ENCODE measurements at regions of chr17 and their contacts with region 1.

Region 1: DNA sequence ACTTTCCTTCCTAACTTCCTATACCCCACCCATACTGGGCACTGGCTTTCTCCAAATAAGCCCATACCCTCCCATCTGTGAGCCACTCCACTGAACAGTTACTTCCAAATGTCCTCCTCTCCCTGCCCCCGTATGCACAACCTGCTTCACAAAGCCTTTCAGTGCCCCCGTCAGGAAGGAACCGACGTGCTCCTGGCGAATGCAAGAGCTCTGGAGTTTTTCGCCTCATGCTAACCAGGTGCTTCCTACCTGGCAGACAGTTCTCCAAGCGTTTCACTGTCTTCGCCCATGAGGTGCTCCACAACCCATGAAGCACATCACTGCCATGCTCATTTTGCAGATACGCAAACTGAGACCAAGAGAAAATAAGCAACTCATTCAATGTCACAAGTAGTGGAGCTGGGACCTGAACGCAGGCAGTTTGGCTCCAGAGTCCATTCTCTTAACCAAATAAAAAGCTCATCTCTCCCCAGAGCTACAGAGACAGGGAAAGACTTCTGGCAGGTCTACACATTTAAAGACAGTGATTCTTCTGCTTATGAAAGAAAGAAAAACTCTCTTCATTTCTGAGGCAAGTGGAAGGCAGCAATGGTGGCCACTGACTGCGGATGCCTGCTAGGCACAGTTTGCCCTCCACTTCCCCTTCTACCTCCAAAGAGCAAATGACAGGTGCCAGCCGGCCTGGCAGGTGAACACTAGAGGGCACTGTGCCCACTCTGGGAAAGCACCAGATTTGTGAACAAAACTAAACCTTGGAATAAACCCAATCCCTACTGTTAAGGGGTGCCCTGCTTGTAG is 23.8 kb downstream of the SPHK1 start:
- DNase-seq: peak; percentile 82
- H3K4me3 ChIP-seq: no peak overlapping the region; a peak in 1 of 4 replicates
- H3K27ac ChIP-seq: no peak overlapping the region
- H3K4me1 ChIP-seq: peaks cover 0 to 16% of the 10 kb centered on the region in 2 experiments; a peak in 2 of 4 replicates
- H3K27me3 ChIP-seq: no peaks in the 10 kb centered on the region
- CTCF ChIP-seq: peak; percentile 99
- EP300 ChIP-seq: no peak
- RAD21 ChIP-seq: peak; percentile 92

Region 2: DNA sequence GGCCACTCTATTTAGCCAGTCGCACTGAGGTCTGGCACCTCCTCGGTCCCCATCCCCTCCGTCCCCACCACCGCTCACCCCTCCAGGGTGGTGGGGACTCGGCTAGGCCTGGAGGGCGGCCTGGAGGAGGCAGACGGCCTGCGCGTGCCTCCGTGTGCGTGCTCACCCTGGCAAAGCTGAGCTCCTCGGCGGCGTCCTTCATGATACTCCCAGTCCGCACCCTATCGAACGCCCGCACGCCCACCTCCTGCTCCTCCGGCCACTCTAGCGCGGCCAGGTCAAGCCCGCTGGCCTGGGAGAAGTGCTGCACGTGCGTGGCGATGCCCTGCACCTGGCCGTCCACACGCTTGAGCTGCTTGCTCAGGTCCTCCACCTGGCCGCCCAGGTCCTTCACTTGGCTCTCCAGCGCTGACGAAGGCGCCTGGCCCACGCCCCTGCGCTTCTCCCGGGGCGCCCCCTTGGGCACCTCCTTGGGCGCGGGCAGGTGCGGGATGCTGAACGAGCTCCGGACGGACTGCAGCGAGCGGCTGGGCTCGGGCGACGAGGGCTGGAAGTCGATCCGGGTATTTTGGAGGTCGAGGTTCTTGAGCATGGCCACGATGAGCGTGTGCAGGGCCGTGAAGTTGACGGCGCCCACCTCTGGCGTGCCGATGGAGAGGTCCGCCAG is 100.8 kb before region 1 on chr17:
- CTCF ChIA-PET with region 1: interaction called, 24 read pairs
- POLR2A ChIA-PET with region 1: no interaction called
- DNase-seq: no peak
- H3K4me3 ChIP-seq: no peak overlapping the region
- H3K27ac ChIP-seq: no peak overlapping the region
- H3K4me1 ChIP-seq: no peaks in the 10 kb centered on the region
- H3K27me3 ChIP-seq: no peaks in the 10 kb centered on the region
- CTCF ChIP-seq: no peak
- EP300 ChIP-seq: no peak
- RAD21 ChIP-seq: no peak

Region 3: DNA sequence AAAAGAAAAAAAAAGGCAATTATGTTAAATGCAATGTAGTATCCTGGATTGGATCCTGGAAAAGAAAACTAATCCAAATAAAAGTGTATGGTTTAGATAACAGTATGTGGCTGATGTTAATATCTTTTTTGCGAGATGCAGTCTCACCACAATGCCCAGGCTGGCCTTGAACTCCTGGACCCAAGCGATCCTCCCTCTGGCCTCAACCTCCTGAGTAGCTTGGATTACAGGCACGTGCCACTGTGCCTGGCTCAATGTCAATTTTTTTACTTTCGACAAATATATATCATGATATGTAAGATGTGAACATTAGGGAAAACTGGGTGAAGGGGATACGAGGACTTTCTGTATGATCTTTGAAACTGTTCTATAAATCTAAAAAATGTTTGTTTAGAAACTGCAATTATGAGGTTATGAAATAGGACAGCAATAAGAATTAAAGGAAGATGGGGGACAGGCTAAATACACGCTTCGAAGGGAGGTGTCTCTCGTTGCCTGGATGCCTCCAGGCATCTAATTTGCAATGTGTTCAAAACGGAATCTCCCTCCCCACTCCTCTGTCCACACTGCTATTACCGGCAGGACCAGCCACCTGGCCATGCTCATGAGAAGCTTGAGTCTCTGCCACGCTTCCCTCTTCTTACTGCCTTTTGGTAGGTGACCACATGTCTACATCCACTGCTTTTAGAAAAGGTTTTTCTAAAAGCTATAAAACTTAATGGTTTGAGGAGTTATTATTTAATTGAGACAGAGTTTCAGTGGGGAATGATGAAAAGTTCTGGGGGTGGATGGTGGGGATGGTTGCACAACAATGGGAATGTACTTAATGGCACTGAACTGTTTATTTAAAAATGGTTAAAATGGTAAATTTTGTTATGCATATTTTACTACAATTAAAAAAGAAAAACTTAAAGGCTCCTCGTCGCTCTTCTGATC is 29.5 kb after region 1 on chr17:
- CTCF ChIA-PET with region 1: interaction called, 40 read pairs
- POLR2A ChIA-PET with region 1: no interaction called
- DNase-seq: no peak
- H3K4me3 ChIP-seq: no peak overlapping the region
- H3K27ac ChIP-seq: no peak overlapping the region
- H3K4me1 ChIP-seq: peaks cover 0 to 11% of the 10 kb centered on the region in 2 experiments; a peak in 2 of 4 replicates
- H3K27me3 ChIP-seq: no peaks in the 10 kb centered on the region
- CTCF ChIP-seq: no peak
- EP300 ChIP-seq: no peak
- RAD21 ChIP-seq: no peak

Region 4: DNA sequence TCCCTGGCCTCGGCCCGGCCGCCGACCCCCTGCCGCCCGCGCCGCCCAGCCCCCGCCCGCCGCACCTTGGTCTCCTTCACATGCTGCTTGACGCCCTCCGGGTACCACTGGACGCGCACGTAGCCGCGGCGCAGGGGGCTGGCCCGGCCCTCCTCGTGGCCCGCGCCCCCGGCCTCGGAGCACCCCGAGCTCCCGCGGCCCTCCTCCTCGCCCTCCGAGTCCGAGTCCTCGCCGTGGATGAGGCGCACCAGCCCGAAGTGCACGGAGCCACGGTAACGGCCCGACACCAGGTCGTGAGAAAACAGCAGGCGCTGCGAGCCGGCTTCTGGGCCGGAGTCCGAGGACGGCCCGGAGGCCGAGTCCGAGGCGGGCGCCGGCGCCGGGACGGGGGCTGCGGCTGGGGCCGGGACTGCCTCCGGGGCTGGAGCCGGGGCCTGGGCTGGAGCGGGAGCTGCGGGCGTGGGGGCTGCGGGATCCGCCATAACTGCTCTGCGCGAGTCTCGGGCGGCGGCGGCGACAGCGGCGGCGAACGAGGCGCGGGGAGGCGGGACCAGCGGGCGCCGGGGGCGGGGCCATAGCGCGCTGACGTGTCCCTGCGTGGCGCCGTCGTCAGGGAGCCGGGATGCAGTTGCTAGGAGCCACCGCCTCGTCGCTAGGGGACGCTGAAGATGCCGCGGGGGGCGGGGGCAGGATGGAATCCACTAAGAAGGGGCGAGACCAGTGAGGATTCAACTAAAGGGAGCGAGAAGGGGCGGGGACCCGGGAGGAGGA is 44.6 kb after region 1 on chr17 and contains the start of gene UBE2O:
- CTCF ChIA-PET with region 1: interaction called, 134 read pairs
- POLR2A ChIA-PET with region 1: interaction called, 9 read pairs
- DNase-seq: peak; percentile 100
- H3K4me3 ChIP-seq: peak within 1 kb of the TSS; percentile 74 to 95
- H3K27ac ChIP-seq: peak within 1 kb of the TSS; percentile 41 to 70
- H3K4me1 ChIP-seq: peaks cover 14 to 21% of the 10 kb centered on the region in 2 experiments
- H3K27me3 ChIP-seq: no peaks in the 10 kb centered on the region
- CTCF ChIP-seq: peak; percentile 64
- EP300 ChIP-seq: no peak; a peak in 1 of 4 replicates
- RAD21 ChIP-seq: no peak
- polyA plus RNA-seq, gene UBE2O: 20.0 and 25.4 TPM in 2 replicates

Region 5: GRCh38 chr17:76467366-76467765 is 59.1 kb after region 1 on chr17 and contains the start of gene AANAT:
- CTCF ChIA-PET with region 1: interaction called, 28 read pairs
- POLR2A ChIA-PET with region 1: no interaction called
- DNase-seq: no peak
- H3K4me3 ChIP-seq: no peak within 1 kb of the TSS
- H3K27ac ChIP-seq: no peak within 1 kb of the TSS
- H3K4me1 ChIP-seq: no peaks in the 10 kb centered on the region; a peak in 1 of 4 replicates
- H3K27me3 ChIP-seq: no peaks in the 10 kb centered on the region
- CTCF ChIP-seq: no peak
- EP300 ChIP-seq: no peak
- RAD21 ChIP-seq: no peak
- polyA plus RNA-seq, gene AANAT: 0.26 TPM in 1 of 2 replicates, not detected in the other

Region 6: DNA sequence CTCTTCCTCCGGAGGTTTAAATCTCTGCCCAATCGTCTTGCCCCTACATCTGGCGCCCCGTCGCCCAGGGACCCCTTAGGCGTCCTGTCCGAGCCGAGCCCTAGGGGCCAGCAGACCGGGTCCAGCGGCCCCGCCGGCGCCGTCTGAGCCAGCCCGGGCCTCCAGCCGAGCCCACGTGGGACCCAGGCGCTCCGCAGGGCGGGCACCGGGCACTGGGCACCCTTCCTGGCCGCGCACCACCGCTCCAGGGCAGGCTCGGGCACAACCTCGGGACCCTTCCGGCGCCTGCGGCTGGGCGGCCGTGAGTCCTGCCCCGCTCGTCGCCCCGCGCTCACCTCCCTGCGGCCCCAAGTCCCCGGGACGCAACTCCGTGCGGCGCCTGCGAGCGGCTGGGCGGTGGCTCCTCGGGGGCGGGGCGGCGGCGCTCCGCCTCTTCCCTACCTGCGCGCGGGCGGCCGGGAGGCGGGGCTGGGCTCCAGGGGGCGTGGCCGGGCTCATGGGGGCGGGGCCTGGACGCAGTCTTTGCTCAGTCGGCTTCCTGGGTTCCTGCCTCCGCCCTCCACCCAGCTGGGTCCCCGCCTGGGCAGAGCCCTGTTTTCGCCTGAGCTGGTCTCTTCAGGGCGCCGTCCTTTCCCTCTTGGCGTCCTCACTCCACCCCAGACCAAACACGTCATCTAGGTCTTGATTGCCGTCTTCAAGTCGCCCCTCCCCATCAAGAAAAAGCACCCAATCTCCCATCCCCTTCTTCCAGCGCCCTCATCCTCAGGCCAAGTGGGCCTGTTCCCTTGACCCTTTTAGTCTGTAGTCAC is 93.0 kb after region 1 on chr17 and contains the start of gene RHBDF2:
- CTCF ChIA-PET with region 1: interaction called, 242 read pairs
- POLR2A ChIA-PET with region 1: no interaction called
- DNase-seq: peak; percentile 97
- H3K4me3 ChIP-seq: peak within 1 kb of the TSS; percentile 65 to 78
- H3K27ac ChIP-seq: peak within 1 kb of the TSS in 1 of 2 experiments; percentile 30; a peak in 1 of 4 replicates
- H3K4me1 ChIP-seq: peaks cover 21 to 50% of the 10 kb centered on the region in 2 experiments; a peak in 3 of 4 replicates
- H3K27me3 ChIP-seq: no peaks in the 10 kb centered on the region
- CTCF ChIP-seq: no peak
- EP300 ChIP-seq: no peak
- RAD21 ChIP-seq: no peak
- polyA plus RNA-seq, gene RHBDF2: 14.0 and 16.1 TPM in 2 replicates

Region 7: DNA sequence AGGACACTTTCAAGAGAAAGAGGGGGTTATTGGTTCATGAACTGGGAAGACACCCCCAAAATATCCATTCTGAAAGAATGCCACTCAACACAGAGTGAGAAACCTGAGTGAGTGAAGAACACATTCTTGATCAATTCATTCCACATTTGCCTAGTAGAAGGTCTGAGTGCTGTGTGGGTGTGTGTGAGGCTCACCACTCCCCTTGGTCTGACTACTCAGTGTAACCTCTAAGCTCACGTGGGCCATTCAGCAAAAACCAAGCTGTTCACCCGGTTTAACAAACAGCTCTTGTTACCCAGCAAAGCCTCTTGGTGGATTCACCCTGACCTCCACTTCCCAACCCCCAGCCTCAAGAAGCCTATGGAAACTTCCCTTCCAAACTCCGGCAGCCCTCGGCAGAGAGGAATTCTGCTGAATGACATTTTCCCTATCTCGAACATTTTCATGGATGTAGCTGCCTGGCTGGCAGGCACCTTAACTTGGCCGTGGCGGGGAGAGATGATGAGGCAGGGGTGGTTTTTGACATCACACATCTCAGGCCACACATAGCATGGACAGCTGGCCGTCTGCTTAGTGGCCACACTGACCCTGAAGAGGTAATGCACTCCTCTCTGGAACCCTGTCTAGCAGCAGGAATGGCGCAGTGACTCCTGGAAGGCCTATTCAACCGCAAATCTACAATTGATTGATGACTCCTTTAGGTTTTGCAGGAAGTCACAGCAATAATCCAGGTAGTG is 223.7 kb after region 1 on chr17:
- CTCF ChIA-PET with region 1: no interaction called
- POLR2A ChIA-PET with region 1: no interaction called
- DNase-seq: no peak
- H3K4me3 ChIP-seq: no peak overlapping the region
- H3K27ac ChIP-seq: no peak overlapping the region
- H3K4me1 ChIP-seq: peaks cover 10 to 14% of the 10 kb centered on the region in 2 experiments
- H3K27me3 ChIP-seq: no peaks in the 10 kb centered on the region
- CTCF ChIP-seq: no peak
- EP300 ChIP-seq: no peak
- RAD21 ChIP-seq: no peak

Measured in SK-N-SH (cell line).